Psoas muscle (tissue), 8 donors: ENCODE measurements at regions of chr4 and their contacts with region 1.

Region 1: GRCh38 chr4:8468746-8469535 is 28.4 kb downstream of the TRMT44 start:
- DNase-seq: peak; percentile 44 to 79
- ATAC-seq: peak; percentile 70 to 80 (median 76)
- H3K4me3 ChIP-seq: no peak overlapping the region
- H3K27ac ChIP-seq: no peak overlapping the region
- H3K4me1 ChIP-seq: no peaks in the 10 kb centered on the region
- H3K27me3 ChIP-seq: no peaks in the 10 kb centered on the region
- CTCF ChIP-seq: peak; percentile 86

Region 2: GRCh38 chr4:8594097-8595038 is 125.4 kb after region 1 on chr4:
- intact Hi-C with region 1: loop called (anchors 1 to 10 kb)
- DNase-seq: no peak
- ATAC-seq: peak; percentile 67 to 81 (median 72)
- H3K4me3 ChIP-seq: no peak overlapping the region
- H3K27ac ChIP-seq: no peak overlapping the region
- H3K4me1 ChIP-seq: no peaks in the 10 kb centered on the region
- H3K27me3 ChIP-seq: peaks cover 0 to 53% (median 20%) of the 10 kb centered on the region in 3 donors
- CTCF ChIP-seq: peak; percentile 55

Region 3: GRCh38 chr4:8765631-8766590 is 297.0 kb after region 1 on chr4:
- intact Hi-C with region 1: no loop called
- DNase-seq: peak in 1 of 2 donors; percentile 17
- ATAC-seq: no peak
- H3K4me3 ChIP-seq: no peak overlapping the region
- H3K27ac ChIP-seq: no peak overlapping the region
- H3K4me1 ChIP-seq: no peaks in the 10 kb centered on the region
- H3K27me3 ChIP-seq: peaks cover 0 to 28% (median 4%) of the 10 kb centered on the region in 3 donors
- CTCF ChIP-seq: no peak

Region 4: DNA sequence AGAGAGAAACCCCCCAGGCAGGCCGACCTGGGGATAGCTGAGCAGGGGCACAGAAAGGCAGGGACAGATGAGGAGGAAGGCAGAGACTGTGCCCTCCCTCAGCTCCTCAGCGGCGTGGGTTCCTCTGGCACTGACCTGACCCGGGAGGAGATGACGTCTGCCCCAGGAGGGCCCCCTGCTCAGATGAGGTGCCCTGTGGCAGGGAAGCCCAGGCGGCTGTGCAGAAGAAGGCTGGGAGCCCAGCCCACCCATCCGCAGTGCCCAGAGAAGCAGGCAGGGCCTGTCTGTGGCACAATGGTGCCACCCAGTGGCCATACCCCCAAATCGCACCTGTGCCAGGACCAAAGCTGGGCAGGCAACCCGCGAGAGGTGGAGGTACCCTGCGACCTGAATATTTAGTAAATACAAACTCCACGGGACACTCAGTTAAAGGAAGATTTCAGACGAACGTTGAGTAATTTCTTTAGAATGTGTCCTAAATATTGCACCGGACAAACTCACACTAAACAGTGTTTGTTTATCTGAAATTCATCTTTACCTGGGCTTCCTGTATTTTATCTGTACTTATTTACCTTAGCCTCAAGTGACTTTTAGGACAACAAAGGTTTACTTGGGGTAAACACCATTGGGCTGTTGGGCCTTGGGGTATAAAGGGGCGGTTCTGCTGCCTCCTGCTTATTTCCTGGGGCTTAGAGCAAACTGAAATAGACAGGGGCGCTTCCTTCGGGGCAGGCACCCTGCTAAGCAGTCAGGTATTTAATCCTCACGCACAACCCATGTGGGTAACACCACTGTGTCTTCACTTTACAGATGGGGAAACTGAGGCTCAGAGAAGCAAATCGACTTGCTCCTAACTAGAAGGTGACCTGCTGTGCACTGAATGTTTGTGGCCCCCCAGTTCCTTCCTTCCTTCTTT is 449.2 kb after region 1 on chr4:
- intact Hi-C with region 1: loop called in 1 of 2 experiments (anchors 10 kb)
- DNase-seq: peak; percentile 47 to 69
- ATAC-seq: peak; percentile 54 to 80 (median 64)
- H3K4me3 ChIP-seq: no peak overlapping the region
- H3K27ac ChIP-seq: no peak overlapping the region
- H3K4me1 ChIP-seq: no peaks in the 10 kb centered on the region
- H3K27me3 ChIP-seq: peaks cover 3 to 23% (median 7%) of the 10 kb centered on the region in 3 donors
- CTCF ChIP-seq: peak; percentile 69